BJ (cell line): ENCODE measurements at regions of chr19 and their contacts with region 1.

Region 1: DNA sequence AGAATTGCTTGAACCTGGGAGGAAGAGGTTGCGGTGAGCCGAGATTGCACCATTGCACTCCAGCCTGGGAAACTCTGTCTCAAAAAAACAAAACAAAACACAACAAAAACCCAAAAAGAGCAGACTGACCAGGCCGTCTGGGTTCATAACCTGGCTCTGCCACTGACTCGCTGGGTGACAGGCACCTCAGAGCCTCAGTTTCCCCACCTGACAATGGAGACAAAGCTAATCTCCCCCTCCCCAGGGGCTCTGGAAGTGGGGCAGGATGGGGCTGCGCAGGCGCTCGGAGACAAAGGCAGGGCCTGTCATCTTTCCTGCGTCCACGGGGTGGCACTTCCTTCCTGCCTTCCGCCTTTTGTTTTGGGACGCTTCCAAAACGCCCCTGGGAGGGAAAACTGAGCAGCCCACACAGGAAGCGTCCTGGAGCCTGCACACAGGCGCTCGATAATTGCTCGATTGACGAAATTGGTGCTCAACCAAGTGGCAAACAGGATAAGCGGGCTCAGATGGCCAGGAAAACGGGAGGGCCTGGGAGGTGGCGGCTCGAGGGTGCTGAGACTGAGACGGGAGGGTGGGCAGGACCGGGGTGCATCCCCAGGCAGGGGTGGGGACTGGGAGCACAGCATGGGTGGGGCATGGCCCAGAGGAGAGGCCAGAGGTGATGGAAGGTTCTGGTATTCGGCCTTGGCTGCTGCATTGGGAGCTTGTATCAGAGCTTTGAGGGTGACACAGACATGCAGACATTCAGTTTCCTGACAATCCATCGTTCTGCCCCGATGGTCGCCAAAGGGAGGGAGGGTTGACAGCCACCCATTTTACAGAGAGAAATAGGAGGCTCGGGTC is 17.8 kb downstream of the SPC24 start:
- DNase-seq: no peak
- H3K4me3 ChIP-seq: peak overlapping the region; percentile 24
- H3K27me3 ChIP-seq: no peaks in the 10 kb centered on the region
- CTCF ChIP-seq: peak; percentile 84

Region 2: DNA sequence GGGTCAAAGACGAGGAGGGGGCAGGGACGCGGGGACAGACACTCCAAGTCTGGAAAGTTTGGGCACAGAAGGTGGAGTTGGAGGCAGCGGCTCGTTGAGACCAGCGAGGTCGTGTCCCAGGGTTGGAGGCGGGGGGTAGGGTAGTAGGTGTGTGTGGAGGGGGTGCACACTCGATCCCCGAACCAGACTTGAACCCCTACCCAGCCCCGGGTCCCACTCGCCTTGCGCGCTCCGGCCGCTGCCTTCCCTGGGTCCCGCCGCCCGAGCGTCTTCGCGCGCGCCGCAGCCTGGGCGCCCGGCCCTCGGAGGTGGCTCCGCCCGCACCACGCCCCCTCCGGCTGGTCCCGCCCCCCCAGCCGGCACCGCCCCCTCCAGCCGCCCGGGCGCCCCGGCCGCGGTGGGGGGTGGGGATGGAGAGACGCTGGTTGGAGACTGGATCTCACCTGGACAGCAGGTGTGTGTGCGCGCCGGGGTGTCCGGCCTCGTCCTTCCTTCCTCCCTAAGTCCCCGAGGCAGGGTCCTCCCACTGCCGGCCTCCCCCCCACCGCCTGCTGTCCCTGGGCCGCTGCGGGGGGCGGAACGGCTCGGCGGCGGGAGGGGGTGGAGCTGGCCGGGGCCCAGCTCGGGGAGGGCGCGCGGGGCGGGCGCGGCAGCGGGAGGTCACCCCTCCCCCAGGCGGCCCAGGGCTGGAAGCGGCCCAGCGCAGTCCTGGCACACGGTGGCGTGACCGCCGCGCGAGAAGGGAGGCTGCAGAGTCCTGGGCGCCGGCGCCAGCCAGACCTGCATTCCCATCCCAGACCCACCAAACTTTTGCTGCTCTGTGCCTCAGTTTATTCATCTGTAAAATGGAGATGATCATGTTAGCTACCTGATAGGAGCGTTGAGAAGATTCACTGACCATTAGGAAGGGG is 59.8 kb after region 1 on chr19 and contains the start of gene KANK2:
- CTCF ChIA-PET with region 1: interaction called, 57 read pairs
- POLR2A ChIA-PET with region 1: no interaction called
- DNase-seq: no peak
- H3K4me3 ChIP-seq: peak within 1 kb of the TSS; percentile 99
- H3K27me3 ChIP-seq: no peaks in the 10 kb centered on the region
- CTCF ChIP-seq: no peak
- polyA plus RNA-seq, gene KANK2: 113 and 176 TPM in 2 replicates

Region 3: DNA sequence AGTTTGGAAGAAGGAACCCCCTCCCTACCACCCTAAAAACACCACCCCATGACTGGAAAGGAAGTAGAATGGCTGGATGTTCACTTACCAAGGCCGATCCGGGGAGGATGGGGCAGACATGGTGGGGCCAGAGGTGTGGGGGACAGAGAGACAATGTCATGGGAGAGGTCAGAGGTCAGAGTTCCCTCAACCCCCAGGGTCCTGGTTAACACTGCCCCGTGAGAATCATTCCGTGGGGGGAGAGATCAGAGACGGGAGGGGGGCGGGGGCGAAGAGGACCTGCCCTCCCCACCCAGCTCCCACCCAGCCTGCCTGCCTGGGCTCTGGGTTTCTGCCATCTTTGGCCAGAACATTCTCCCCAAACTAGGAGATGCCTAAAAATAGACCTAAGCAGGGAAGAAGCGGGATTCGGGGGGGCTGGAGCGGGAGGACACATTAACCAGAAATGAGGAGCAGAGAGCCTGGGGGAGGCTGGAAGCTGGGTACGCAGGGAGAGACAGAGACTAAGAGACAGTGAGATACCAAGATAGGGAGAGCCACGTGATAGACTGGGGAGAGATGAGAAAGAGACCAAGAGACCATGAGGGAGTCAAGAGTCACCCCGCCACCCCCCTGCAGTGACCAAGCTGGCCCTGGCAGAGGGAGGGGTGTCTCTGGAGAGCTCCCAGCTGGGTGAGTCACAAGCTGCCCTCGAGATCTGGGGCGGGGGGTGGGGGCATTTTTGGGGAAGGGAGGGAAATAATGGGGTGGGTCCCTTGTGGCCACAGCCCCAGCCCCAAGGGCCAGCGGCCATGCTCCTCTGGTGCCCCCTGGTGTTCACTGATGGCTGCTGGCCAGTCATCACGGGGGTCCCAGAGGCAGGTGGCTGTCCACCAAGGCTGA is 65.7 kb after region 1 on chr19:
- CTCF ChIA-PET with region 1: interaction called, 57 read pairs
- POLR2A ChIA-PET with region 1: no interaction called
- DNase-seq: peak; percentile 57
- H3K4me3 ChIP-seq: no peak overlapping the region
- H3K27me3 ChIP-seq: no peaks in the 10 kb centered on the region
- CTCF ChIP-seq: peak; percentile 97

Region 4: DNA sequence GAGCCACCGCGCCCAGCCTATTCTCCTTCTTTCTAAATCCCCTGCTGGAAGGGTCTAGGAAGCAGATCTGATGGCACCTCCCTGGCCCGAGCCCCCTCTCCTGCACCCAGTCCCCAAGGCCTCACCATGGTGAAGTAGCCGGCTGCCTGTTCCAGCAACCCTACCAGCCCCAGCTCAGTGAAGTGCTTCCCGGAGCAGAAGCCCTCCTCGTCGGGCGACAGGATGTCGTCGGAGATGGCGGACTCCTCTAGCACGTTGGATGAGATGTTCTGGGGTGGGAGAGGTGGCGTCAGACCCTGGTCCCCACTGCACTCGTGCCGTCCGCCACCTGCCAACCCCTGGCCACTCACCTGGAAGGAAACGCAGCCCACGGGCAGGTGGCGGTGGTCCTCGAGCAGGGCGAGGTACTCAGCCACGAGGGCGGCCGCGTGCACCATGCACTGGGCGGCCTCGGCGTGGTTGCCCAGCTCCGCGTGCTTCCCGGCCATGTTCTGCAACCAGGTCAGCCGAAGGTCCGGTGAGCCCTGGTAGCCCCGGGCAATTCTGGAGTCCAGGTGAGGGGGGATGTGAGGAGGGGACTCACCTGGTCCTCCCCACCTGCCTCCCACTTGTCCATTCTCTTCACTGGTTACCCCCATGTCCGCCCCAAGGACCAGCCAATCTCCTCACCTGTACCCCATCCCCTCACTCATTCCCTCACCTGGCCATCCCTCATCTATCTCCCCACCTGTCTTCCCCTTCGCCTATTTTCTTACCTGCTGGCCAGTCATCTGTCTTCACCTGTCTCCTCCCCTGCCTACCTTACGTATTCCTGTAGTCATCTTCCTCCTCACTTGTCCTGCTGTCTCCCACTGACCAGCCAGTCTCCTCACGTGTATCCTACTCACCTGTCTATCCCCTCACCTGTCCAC is 71.1 kb after region 1 on chr19:
- CTCF ChIA-PET with region 1: interaction called, 57 read pairs
- POLR2A ChIA-PET with region 1: no interaction called
- DNase-seq: no peak
- H3K4me3 ChIP-seq: no peak overlapping the region
- H3K27me3 ChIP-seq: no peaks in the 10 kb centered on the region
- CTCF ChIP-seq: no peak